WTC11 (cell line): ENCODE measurements at regions of chr10 and their contacts with region 1.

Region 1: GRCh38 chr10:121608469-121609190 is 10.4 kb upstream of the FGFR2 start:
- DNase-seq: peak; percentile 72
- ATAC-seq: peak; percentile 81
- H3K4me3 Mint-ChIP-seq: peak overlapping the region; percentile 40; the same call in 1 of the 2 replicates
- H3K27ac Mint-ChIP-seq: no peak overlapping the region
- H3K4me1 Mint-ChIP-seq: peaks cover 34% of the 10 kb centered on the region
- H3K27me3 Mint-ChIP-seq: peaks cover 16% of the 10 kb centered on the region
- CTCF ChIP-seq: peak; percentile 93

Region 2: DNA sequence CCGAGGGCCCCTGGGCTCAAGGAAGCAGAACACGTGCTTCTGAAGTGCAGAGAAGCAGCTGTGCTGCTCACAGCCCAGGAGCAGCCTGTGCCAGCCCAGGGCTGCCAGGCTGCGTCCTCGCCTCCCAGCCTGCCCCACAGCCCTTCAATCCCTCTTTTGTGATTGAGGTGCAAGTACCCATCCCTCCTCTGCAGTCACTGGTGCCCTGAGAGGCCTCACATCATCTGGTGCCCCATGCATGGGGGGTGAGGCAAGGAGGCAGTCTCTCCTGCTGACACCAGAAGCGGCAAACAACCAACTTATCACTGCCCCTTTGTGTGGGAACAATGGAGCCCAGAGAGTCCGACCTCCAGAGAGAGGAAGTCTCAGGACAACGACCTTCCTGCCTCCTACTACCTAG is 39.4 kb after region 1 on chr10:
- CTCF ChIA-PET with region 1: no interaction called
- POLR2A ChIA-PET with region 1: no interaction called
- DNase-seq: no peak
- ATAC-seq: peak; percentile 55
- H3K4me3 Mint-ChIP-seq: no peak overlapping the region
- H3K27ac Mint-ChIP-seq: no peak overlapping the region
- H3K4me1 Mint-ChIP-seq: peaks cover 17% of the 10 kb centered on the region
- H3K27me3 Mint-ChIP-seq: peaks cover 2% of the 10 kb centered on the region; the same call in 1 of the 2 replicates
- CTCF ChIP-seq: no peak

Region 3: GRCh38 chr10:121668314-121669027 is 59.8 kb after region 1 on chr10:
- CTCF ChIA-PET with region 1: interaction called, 23 read pairs
- POLR2A ChIA-PET with region 1: no interaction called
- DNase-seq: peak; percentile 56
- ATAC-seq: peak; percentile 85
- H3K4me3 Mint-ChIP-seq: peak overlapping the region; percentile 24; the same call in 1 of the 2 replicates
- H3K27ac Mint-ChIP-seq: peak overlapping the region; percentile 16; the same call in 1 of the 2 replicates
- H3K4me1 Mint-ChIP-seq: peaks cover 26% of the 10 kb centered on the region
- H3K27me3 Mint-ChIP-seq: no peaks in the 10 kb centered on the region; the same call in 1 of the 2 replicates
- CTCF ChIP-seq: no peak